ENCODE measurements at regions of chr10 and their contacts with region 1.

Region 1: GRCh38 chr10:9018195-9019173 is 964.0 kb downstream of the GATA3 start:
- DNase-seq: peak in 1 of 5 donors; percentile 41
- H3K4me3 ChIP-seq: peak overlapping the region in 1 of 2 donors; percentile 14
- H3K4me3 Mint-ChIP-seq: peak overlapping the region; percentile 61 to 86 (median 76)
- H3K27ac ChIP-seq: peak overlapping the region; percentile 12
- H3K27ac Mint-ChIP-seq: peak overlapping the region; percentile 24 to 91 (median 78)
- H3K4me1 ChIP-seq: no peaks in the 10 kb centered on the region
- H3K4me1 Mint-ChIP-seq: peaks cover 5 to 26% (median 10%) of the 10 kb centered on the region in 4 donors
- H3K27me3 ChIP-seq: no peaks in the 10 kb centered on the region
- H3K27me3 Mint-ChIP-seq: peaks cover 4 to 10% of the 10 kb centered on the region in 2 donors

Region 2: GRCh38 chr10:9004736-9005135 is 13.7 kb before region 1 on chr10:
- CTCF ChIA-PET with region 1: interaction called, 6 read pairs
- POLR2A ChIA-PET with region 1: interaction called, 40 read pairs
- intact Hi-C with region 1: no loop called
- DNase-seq: peak in 2 of 5 donors; percentile 32 to 41
- H3K4me3 ChIP-seq: peak overlapping the region in 1 of 2 donors; percentile 5
- H3K4me3 Mint-ChIP-seq: peak overlapping the region; percentile 41 to 80 (median 68)
- H3K27ac ChIP-seq: peak overlapping the region; percentile 40
- H3K27ac Mint-ChIP-seq: peak overlapping the region; percentile 43 to 95 (median 79)
- H3K4me1 ChIP-seq: peaks cover 24% of the 10 kb centered on the region
- H3K4me1 Mint-ChIP-seq: peaks cover 26 to 45% (median 35%) of the 10 kb centered on the region in 4 donors
- H3K27me3 ChIP-seq: no peaks in the 10 kb centered on the region
- H3K27me3 Mint-ChIP-seq: no peaks in the 10 kb centered on the region

Region 3: GRCh38 chr10:9060314-9060713 is 41.8 kb after region 1 on chr10:
- CTCF ChIA-PET with region 1: no interaction called
- POLR2A ChIA-PET with region 1: interaction called, 8 read pairs
- intact Hi-C with region 1: loop called (anchors 5 kb)
- DNase-seq: peak in 3 of 5 donors; percentile 9 to 33 (median 10)
- H3K4me3 ChIP-seq: no peak overlapping the region
- H3K4me3 Mint-ChIP-seq: peak overlapping the region; percentile 43 to 72 (median 55)
- H3K27ac ChIP-seq: no peak overlapping the region
- H3K27ac Mint-ChIP-seq: peak overlapping the region in 6 of 7 donors; percentile 18 to 84 (median 66)
- H3K4me1 ChIP-seq: peaks cover 17% of the 10 kb centered on the region
- H3K4me1 Mint-ChIP-seq: peaks cover 10 to 23% (median 12%) of the 10 kb centered on the region in 4 donors
- H3K27me3 ChIP-seq: no peaks in the 10 kb centered on the region
- H3K27me3 Mint-ChIP-seq: peaks cover 0 to 1% of the 10 kb centered on the region in 2 donors

Region 4: DNA sequence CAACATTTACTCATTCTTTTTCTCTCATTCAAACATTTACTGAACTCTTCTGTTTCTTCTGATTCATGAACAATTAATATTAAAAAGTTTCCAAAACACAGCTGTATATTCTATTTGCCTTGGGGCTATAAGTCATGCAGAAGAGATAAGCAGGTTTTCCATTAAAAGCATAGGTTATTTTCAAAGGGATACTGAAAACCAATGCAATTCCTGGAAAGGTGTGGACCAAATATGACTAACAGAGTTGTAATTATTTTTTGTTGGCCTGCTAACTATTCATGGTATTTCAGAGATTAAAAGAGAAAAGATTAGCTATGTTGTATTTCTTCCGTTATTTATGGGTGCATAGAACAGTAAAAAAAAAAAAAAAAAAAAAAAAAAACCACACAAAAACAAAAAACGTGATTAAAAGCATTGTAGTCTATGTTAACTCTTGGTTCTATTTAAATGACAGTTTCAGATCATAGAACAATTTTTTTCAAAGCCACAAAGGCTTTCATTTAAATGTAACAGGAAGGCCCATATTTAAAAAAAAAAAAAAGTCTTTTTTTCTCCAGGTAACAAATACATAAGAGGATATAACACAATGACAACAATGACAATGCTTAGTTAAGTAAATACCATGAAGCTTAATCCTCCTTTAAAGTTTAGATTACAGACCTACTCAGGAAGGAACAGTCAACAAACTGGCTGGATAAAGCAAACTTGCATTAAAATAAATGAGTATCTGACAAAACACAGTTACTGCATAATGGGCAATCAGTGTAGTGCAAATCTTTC is 78.9 kb after region 1 on chr10:
- CTCF ChIA-PET with region 1: no interaction called
- POLR2A ChIA-PET with region 1: interaction called, 12 read pairs
- intact Hi-C with region 1: loop called (anchors 5 kb)
- DNase-seq: peak in 4 of 5 donors; percentile 71 to 82 (median 77)
- H3K4me3 ChIP-seq: no peak overlapping the region
- H3K4me3 Mint-ChIP-seq: peak overlapping the region in 6 of 8 donors; percentile 12 to 67 (median 47)
- H3K27ac ChIP-seq: no peak overlapping the region
- H3K27ac Mint-ChIP-seq: peak overlapping the region; percentile 77 to 95 (median 88)
- H3K4me1 ChIP-seq: peaks cover 33% of the 10 kb centered on the region
- H3K4me1 Mint-ChIP-seq: peaks cover 17 to 30% (median 25%) of the 10 kb centered on the region in 4 donors
- H3K27me3 ChIP-seq: no peaks in the 10 kb centered on the region
- H3K27me3 Mint-ChIP-seq: peaks cover 0 to 2% of the 10 kb centered on the region in 2 donors

Measured in CD4-positive, alpha-beta memory T cell (primary cell).